Colonic mucosa (tissue), 4 donors: ENCODE measurements at regions of chr5 and their contacts with region 1.

Region 1: DNA sequence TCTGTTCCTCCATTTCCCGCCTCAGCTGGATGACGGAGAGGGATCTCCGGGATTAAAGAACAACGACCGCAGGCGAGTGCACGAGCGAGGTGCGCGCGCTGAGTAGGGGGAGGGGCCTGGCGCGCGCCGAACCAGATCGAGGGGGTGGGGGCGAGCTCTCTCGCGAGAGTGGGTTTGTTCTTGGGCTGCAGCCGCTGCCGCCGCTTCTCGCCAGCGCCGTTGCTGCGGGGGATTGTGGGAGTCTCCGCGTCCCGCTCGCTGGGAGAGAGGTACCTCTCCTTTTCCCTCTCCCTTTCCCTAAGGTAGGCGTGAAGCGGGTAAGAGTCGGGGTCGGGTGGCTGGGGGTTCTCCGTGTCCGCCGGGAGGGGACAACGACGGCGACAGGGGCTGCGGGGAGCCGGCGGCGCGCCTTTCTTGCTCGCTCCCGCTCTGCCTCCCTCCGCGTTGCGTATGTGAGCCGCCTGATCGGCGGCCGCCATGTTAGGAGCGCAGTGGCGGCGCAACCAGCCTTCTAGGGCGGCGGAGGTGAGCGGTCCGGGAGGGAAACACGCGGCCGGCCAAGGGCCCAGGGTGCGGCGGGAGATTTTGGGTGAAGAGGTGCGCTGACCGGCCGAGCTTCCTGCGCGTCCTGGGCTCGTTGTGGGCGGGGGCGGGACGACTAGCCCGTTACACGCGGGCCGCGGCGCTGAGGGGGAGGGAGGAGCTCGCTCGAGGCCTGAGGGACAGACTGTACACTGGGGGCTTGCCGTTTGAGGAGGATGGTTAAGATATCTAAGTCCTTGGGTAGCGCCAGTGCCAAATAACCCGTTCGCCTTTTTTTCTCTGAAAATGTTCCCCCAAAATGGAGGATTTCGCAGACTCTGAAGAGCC is at the start of gene MATR3:
- DNase-seq: peak; percentile 96
- H3K4me3 ChIP-seq: peak within 1 kb of the TSS; percentile 85
- H3K27ac ChIP-seq: peak within 1 kb of the TSS; percentile 100
- H3K4me1 ChIP-seq: peaks cover 13% of the 10 kb centered on the region
- H3K27me3 ChIP-seq: no peaks in the 10 kb centered on the region
- CTCF ChIP-seq: no peak
- total RNA-seq, gene MATR3: 105 to 128 TPM

Region 2: DNA sequence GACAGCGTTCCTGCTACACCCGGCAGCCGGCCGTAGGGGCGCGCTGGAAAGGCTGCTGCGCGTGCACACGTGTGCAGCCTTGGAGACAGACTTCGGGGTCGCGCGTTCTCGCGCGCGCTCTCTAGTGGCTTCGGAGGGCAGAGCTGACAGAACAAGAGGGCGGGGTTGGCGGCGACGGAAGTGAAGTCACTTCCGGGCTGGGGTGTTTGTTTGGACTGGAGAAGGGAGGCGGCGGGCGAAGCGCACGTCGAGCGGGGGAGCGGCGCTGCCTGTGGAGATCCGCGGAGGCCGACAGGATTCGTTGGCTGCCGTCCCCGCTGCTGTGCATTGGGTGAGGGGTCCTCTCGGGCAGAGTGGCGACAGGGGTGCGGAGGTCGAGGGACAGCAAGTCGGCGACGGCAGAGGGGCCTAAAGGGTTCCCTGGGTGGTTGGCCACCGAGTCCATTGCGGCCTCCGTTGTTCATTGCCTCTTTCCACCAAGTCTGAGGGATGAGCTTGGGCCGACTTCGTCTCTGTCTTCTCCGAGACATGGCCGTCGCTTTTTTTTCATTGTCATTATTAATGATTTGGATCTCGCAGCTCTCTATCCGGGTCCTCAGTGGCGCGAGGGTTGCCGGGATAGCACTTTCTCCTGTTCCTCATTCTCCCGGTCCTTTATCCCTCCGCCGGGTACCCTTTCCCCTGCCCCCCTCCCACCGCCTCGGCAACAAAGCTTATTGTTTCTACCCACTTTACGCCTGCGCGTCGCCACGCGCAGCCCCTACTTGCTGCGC is 48.1 kb after region 1 on chr5 and contains the start of gene PAIP2:
- intact Hi-C with region 1: loop called (anchors 5 kb)
- DNase-seq: peak; percentile 99
- H3K4me3 ChIP-seq: peak within 1 kb of the TSS; percentile 57
- H3K27ac ChIP-seq: peak within 1 kb of the TSS; percentile 84
- H3K4me1 ChIP-seq: peaks cover 10% of the 10 kb centered on the region
- H3K27me3 ChIP-seq: no peaks in the 10 kb centered on the region
- CTCF ChIP-seq: peak; percentile 60
- total RNA-seq, gene PAIP2: 39.4 to 49.7 TPM